Transverse colon (tissue), 4 donors: ENCODE measurements at regions of chr11 and their contacts with region 1.

Region 1: DNA sequence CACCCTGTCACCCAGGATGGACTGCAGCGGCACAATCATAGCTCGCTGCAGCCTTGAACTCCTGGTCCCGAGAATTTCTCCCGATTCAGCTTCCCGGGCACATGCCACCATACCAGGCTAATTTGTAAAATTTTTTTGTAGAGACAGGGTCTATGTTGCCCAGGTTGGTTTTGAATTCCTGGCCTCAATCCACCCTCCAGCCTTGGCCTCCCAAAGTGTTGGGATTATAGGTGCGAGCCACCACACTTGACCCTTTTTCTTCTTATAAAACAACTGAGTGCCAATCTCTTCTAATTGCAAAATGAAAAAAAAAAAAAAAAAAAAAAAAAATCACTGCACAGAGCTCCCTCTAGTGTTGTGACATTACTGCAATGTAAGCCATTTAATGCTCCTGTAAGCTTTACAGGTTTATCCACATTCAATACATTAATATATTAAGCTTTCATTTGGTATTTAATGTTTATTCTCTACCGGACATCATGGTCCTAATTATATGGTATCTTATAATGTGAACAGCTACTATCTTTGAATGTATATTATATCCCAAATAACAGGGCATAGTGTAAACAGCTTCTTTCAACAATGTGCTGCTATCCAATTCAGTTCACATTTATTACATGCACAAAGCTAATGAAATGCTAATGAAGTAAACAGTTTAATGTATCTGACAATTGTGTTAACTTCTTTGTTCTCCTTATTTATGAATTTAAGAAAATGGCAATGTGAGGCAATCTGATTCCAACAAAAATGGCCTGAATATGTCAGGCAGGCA is 44.6 kb downstream of the COPB1 start:
- DNase-seq: no peak
- H3K4me3 ChIP-seq: no peak overlapping the region
- H3K27ac ChIP-seq: no peak overlapping the region
- H3K4me1 ChIP-seq: no peaks in the 10 kb centered on the region
- H3K27me3 ChIP-seq: no peaks in the 10 kb centered on the region
- CTCF ChIP-seq: peak; percentile 37 to 60 (median 49)
- EP300 ChIP-seq: no peak
- POLR2A ChIP-seq: no peak

Region 2: GRCh38 chr11:13834463-13834862 is 620.6 kb before region 1 on chr11:
- in situ Hi-C with region 1: no loop called
- intact Hi-C with region 1: no loop called
- DNase-seq: no peak
- H3K4me3 ChIP-seq: no peak overlapping the region
- H3K27ac ChIP-seq: no peak overlapping the region
- H3K4me1 ChIP-seq: no peaks in the 10 kb centered on the region
- H3K27me3 ChIP-seq: no peaks in the 10 kb centered on the region
- CTCF ChIP-seq: peak in 2 of 5 experiments; percentile 15 to 27
- EP300 ChIP-seq: no peak
- POLR2A ChIP-seq: no peak

Region 3: DNA sequence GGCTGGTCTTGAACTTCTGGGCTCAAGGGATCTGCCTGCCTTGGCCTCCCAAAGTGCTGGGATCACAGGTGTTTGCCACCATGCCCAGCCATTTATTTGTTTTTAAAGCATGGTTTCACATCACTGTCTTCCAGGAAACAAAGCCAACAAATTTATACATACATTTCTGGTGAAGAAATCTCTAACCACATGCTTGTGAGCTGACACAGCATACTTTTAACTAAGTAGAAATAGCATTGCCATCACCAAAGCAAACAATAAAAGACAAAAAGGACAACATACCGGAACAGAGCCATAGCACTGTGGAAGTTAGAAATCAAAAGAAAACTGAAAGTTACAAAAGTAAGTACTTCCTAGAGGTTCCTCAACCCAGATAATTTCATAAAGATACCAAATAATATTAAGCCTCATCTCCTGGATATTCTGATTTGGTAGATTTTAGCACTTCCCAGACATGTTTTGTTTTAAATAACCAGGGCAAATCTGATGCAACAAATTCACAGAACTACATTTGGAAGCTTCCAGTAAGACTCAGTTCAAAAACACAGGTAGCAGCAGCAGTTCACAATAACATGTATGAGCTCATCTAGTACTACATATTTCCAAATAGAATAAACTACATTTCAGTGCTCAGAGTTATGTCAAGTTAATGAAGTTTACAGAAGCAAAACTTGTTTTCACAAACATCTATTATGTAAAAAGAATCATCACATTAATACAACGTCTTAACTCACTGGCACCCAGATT is 166.7 kb before region 1 on chr11:
- in situ Hi-C with region 1: loop called in 3 of 4 experiments (anchors 10 to 25 kb)
- intact Hi-C with region 1: no loop called
- DNase-seq: no peak
- H3K4me3 ChIP-seq: no peak overlapping the region
- H3K27ac ChIP-seq: peak overlapping the region in 2 of 4 donors; percentile 23 to 54
- H3K4me1 ChIP-seq: peaks cover 0 to 6% (median 0%) of the 10 kb centered on the region in 4 donors
- H3K27me3 ChIP-seq: no peaks in the 10 kb centered on the region
- CTCF ChIP-seq: no peak
- EP300 ChIP-seq: no peak
- POLR2A ChIP-seq: no peak

Region 4: GRCh38 chr11:14300661-14301304 is 154.3 kb before region 1 on chr11:
- in situ Hi-C with region 1: loop called (anchors 10 to 25 kb)
- intact Hi-C with region 1: loop called (anchors 5 kb)
- DNase-seq: peak; percentile 48
- H3K4me3 ChIP-seq: no peak overlapping the region
- H3K27ac ChIP-seq: no peak overlapping the region
- H3K4me1 ChIP-seq: peaks cover 0 to 18% (median 0%) of the 10 kb centered on the region in 4 donors
- H3K27me3 ChIP-seq: no peaks in the 10 kb centered on the region
- CTCF ChIP-seq: peak; percentile 67 to 79 (median 70)
- EP300 ChIP-seq: no peak
- POLR2A ChIP-seq: no peak

Region 5: DNA sequence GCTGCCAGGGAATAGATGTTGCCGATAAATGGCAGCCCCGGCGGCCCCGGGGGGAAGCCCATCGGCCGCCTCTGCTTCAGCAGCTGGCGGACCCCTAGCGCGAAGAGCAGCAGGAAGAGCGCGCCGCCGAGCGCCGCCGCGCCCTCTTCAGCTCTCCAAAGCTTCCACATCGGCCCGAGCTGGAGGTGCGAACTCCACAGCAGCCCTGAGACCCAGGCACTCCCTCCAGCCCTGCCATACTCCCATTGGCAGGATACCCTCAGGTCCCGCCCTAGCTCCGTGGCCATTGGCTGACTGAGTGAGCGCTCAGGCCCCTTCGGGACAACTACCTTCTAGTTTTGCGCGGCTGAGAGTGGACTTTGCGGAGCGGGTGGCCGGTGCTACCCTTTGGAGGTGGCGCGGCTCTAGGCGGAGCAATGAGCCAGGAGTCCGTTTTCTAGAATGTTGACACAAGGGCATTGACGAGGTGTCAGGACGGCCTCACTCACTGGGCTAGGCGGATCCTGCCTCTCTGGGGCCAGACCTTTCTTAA is 437.1 kb after region 1 on chr11 and contains the start of gene CYP2R1:
- in situ Hi-C with region 1: no loop called
- intact Hi-C with region 1: no loop called
- DNase-seq: peak; percentile 98
- H3K4me3 ChIP-seq: peak within 1 kb of the TSS; percentile 55 to 78 (median 64)
- H3K27ac ChIP-seq: peak within 1 kb of the TSS; percentile 92 to 98 (median 95)
- H3K4me1 ChIP-seq: peaks cover 4 to 39% (median 9%) of the 10 kb centered on the region in 4 donors
- H3K27me3 ChIP-seq: no peaks in the 10 kb centered on the region
- CTCF ChIP-seq: no peak
- EP300 ChIP-seq: no peak
- POLR2A ChIP-seq: peak; percentile 86
- total RNA-seq, gene CYP2R1: 26.1 to 54.2 (median 44.6) TPM